HCT116 (cell line): ENCODE measurements at regions of chr7 and their contacts with region 1.

Region 1: DNA sequence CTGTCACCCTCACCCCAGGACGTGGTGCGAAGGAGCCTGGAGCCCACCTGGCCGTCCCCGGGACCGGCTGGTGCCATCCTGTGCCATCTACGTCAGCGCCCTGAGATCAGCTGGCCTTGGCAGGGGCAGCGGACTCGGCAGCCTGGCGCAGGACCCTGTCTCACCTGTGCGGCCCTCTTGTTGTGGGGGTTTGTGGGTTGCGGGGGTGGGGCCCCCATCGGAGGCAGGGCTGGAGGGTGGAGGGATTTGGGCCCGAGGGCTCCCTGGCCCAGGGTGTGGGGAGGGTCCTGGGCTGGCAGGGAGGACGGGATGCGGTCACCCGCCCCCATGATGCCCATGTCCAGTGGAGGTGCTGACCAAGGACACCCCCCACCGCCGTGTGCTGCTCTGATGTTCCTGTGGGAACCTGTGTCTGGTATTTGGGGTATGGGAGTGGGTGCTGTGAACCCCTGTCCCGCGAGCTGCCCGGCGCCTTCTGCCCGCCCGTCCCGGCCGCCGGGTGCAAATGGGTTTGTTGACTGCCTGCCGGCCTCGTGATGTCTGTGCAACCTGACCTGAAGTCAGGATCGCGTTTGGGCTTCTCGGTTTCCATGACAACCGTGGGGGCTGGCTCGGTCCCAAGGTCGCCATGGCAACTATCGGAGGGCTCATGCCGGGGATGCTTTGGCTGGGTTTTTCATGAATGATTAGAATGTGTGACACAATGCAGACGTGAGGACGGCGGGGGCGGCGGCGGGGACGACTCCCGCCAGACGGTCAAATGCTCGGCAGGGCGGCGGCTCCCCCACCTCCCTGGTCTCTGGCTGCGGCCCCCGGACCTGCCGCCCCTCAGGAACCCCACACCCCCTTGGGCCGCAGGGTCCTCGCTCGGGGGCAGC is 7.3 kb downstream of the MAFK start:
- DNase-seq: no peak
- ATAC-seq: peak; percentile 14; the same call in 1 of the 2 replicates
- H3K4me3 ChIP-seq: peak overlapping the region; percentile 38 to 49
- H3K27ac ChIP-seq: peak overlapping the region; percentile 83
- H3K4me1 ChIP-seq: peaks cover 43 to 54% of the 10 kb centered on the region in 2 experiments
- H3K27me3 ChIP-seq: no peaks in the 10 kb centered on the region
- CTCF ChIP-seq: no peak
- POLR2A ChIP-seq: no peak
- RAD21 ChIP-seq: no peak

Region 2: GRCh38 chr7:1503816-1504775 is 33.7 kb before region 1 on chr7 and contains the start of gene INTS1:
- CTCF ChIA-PET with region 1: no interaction called
- POLR2A ChIA-PET with region 1: interaction called, 3 read pairs
- RAD21 ChIA-PET with region 1: no interaction called
- intact Hi-C with region 1: loop called (anchors 1 kb)
- DNase-seq: peak; percentile 90
- ATAC-seq: peak; percentile 93
- H3K4me3 ChIP-seq: peak within 1 kb of the TSS; percentile 65 to 97
- H3K27ac ChIP-seq: peak within 1 kb of the TSS; percentile 79
- H3K4me1 ChIP-seq: peaks cover 37 to 43% of the 10 kb centered on the region in 2 experiments
- H3K27me3 ChIP-seq: no peaks in the 10 kb centered on the region
- CTCF ChIP-seq: peak in 2 of 3 experiments; percentile 73 to 81; a peak in 4 of 6 replicates
- POLR2A ChIP-seq: peak; percentile 54
- RAD21 ChIP-seq: no peak
- total RNA-seq, gene INTS1: 167 TPM